B cell (primary cell): ENCODE measurements at regions of chr5 and their contacts with region 1.

Region 1: GRCh38 chr5:154038707-154039457 is at the starts of genes FAM114A2 and MFAP3:
- DNase-seq: peak; percentile 90
- ATAC-seq: peak; percentile 98
- H3K4me3 ChIP-seq: peak within 1 kb of the TSS; percentile 77 to 94 (median 86)
- H3K4me3 Mint-ChIP-seq: peak within 1 kb of the TSS; percentile 99
- H3K27ac ChIP-seq: peak within 1 kb of the TSS; percentile 88 to 90
- H3K27ac Mint-ChIP-seq: peak within 1 kb of the TSS; percentile 99
- H3K4me1 ChIP-seq: peaks cover 13 to 16% of the 10 kb centered on the region in 2 donors
- H3K4me1 Mint-ChIP-seq: peaks cover 46% of the 10 kb centered on the region
- H3K27me3 ChIP-seq: no peaks in the 10 kb centered on the region
- H3K27me3 Mint-ChIP-seq: no peaks in the 10 kb centered on the region
- CTCF ChIP-seq: no peak
- total RNA-seq, gene FAM114A2: 34.2 and 36.2 TPM in 2 replicates
- total RNA-seq, gene MFAP3: 22.9 and 27.1 TPM in 2 replicates

Region 2: DNA sequence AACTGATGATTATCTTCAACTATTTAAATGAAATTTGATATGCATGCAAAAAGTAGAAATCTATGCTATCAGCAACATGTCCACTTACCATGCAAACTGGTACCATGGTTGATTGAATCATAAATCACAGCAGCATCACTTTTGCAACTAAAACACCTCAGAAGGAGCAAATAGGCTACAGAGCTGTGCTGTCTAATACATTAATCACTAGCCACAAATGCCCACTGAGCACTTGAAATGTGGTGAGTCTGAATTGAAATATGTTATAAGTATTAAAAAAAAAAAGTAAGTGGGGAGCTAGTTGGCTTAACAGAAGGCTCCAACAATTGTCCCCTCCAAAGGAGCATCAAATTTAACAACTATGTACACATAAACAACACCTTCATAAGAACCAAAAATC is 112.7 kb before region 1 on chr5:
- CTCF ChIA-PET with region 1: no interaction called
- POLR2A ChIA-PET with region 1: no interaction called
- intact Hi-C with region 1: no loop called
- DNase-seq: no peak
- ATAC-seq: no peak
- H3K4me3 ChIP-seq: no peak overlapping the region
- H3K4me3 Mint-ChIP-seq: no peak overlapping the region
- H3K27ac ChIP-seq: no peak overlapping the region
- H3K27ac Mint-ChIP-seq: no peak overlapping the region
- H3K4me1 ChIP-seq: no peaks in the 10 kb centered on the region
- H3K4me1 Mint-ChIP-seq: no peaks in the 10 kb centered on the region
- H3K27me3 ChIP-seq: no peaks in the 10 kb centered on the region
- H3K27me3 Mint-ChIP-seq: peaks cover 12% of the 10 kb centered on the region
- CTCF ChIP-seq: no peak

Region 3: DNA sequence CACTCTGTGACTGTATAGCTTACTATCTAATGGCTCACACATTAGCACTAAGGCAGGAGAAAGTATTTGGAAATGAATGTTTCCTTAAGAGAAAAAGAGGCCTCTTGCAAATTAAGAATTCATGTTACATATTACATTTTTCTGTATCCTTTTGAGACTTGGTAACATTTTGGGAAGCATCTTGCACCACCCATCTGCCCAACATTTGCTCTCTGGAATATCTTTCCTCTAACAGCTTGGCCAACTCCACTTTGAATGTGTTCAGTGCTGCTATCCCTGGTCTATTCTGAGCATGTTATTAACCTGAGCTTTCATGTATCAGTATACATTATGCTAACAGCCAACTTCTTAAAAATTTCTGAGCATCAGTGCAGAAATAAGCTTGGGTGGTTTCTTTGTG is 27.1 kb after region 1 on chr5:
- CTCF ChIA-PET with region 1: no interaction called
- POLR2A ChIA-PET with region 1: no interaction called
- intact Hi-C with region 1: no loop called
- DNase-seq: no peak
- ATAC-seq: no peak
- H3K4me3 ChIP-seq: no peak overlapping the region
- H3K4me3 Mint-ChIP-seq: no peak overlapping the region
- H3K27ac ChIP-seq: no peak overlapping the region
- H3K27ac Mint-ChIP-seq: no peak overlapping the region
- H3K4me1 ChIP-seq: no peaks in the 10 kb centered on the region
- H3K4me1 Mint-ChIP-seq: no peaks in the 10 kb centered on the region
- H3K27me3 ChIP-seq: no peaks in the 10 kb centered on the region
- H3K27me3 Mint-ChIP-seq: peaks cover 18% of the 10 kb centered on the region
- CTCF ChIP-seq: no peak

Region 4: DNA sequence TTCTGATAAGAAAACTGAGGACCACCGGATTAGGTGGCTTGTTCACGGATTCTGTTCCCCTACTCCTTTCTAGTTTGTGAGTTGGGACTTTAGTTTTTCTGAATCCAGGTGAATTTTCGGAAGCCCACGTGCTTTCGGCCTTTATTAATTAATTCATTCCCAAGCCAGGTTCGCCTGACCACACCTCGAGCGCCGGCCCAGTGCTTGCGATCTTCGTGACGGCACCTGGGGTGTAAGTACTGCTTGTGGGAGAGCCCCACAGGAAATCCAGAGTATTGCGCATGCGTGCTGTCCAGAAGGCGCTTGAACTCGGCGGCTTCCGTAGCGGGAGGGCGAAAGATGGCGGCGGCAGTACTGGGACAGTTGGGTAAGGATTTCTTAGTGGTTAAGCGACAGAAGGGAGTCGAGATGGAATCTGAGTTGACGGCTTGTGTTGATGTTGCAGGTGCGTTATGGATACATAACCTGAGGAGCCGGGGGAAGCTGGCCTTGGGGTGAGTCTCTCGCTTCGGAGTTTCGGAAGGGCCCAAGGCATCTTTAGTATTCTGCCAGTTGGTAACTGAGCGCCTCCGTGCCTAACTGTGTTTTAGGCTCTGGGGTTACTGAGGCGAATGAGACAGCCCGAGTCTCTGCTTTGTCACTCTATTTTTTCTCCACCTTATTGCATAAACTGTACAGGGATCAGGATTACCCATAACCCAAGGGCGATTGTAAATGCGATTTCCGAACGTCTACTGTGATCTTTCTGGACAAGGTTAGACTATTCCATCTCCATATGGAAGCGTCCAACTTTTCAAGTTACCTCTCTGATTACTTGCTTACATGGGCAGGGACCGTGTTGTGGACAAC is 902.1 kb after region 1 on chr5 and contains the start of gene MRPL22:
- CTCF ChIA-PET with region 1: no interaction called
- POLR2A ChIA-PET with region 1: interaction called, 3 read pairs
- intact Hi-C with region 1: loop called (anchors 10 kb)
- DNase-seq: peak; percentile 97
- ATAC-seq: peak; percentile 67
- H3K4me3 ChIP-seq: peak within 1 kb of the TSS; percentile 57 to 94 (median 77)
- H3K4me3 Mint-ChIP-seq: peak within 1 kb of the TSS; percentile 99
- H3K27ac ChIP-seq: peak within 1 kb of the TSS; percentile 56 to 88
- H3K27ac Mint-ChIP-seq: peak within 1 kb of the TSS; percentile 93
- H3K4me1 ChIP-seq: peaks cover 27 to 32% of the 10 kb centered on the region in 2 donors
- H3K4me1 Mint-ChIP-seq: peaks cover 51% of the 10 kb centered on the region
- H3K27me3 ChIP-seq: no peaks in the 10 kb centered on the region
- H3K27me3 Mint-ChIP-seq: no peaks in the 10 kb centered on the region
- CTCF ChIP-seq: no peak
- total RNA-seq, gene MRPL22: 21.4 and 32.5 TPM in 2 replicates